CD4-positive, alpha-beta T cell (primary cell): ENCODE measurements at regions of chr11 and their contacts with region 1.

Region 1: GRCh38 chr11:119067371-119068222 is at the start of gene VPS11:
- DNase-seq: peak; percentile 93 to 99 (median 98)
- ATAC-seq: peak; percentile 91
- H3K4me3 ChIP-seq: peak within 1 kb of the TSS; percentile 99
- H3K4me3 Mint-ChIP-seq: peak within 1 kb of the TSS; percentile 91
- H3K27ac ChIP-seq: peak within 1 kb of the TSS; percentile 84 to 95
- H3K27ac Mint-ChIP-seq: peak within 1 kb of the TSS; percentile 90
- H3K4me1 ChIP-seq: peaks cover 43% of the 10 kb centered on the region
- H3K4me1 Mint-ChIP-seq: peaks cover 45% of the 10 kb centered on the region
- H3K27me3 ChIP-seq: no peaks in the 10 kb centered on the region
- H3K27me3 Mint-ChIP-seq: no peaks in the 10 kb centered on the region
- CTCF ChIP-seq: no peak
- total RNA-seq, gene VPS11: 76.4 to 84.3 TPM

Region 2: GRCh38 chr11:118997627-118998387 is 69.8 kb before region 1 on chr11 and contains the start of gene CENATAC:
- CTCF ChIA-PET with region 1: no interaction called
- POLR2A ChIA-PET with region 1: interaction called, 12 read pairs
- intact Hi-C with region 1: no loop called
- DNase-seq: peak; percentile 90 to 98 (median 96)
- ATAC-seq: peak; percentile 91
- H3K4me3 ChIP-seq: peak within 1 kb of the TSS; percentile 74
- H3K4me3 Mint-ChIP-seq: peak within 1 kb of the TSS; percentile 98
- H3K27ac ChIP-seq: peak within 1 kb of the TSS; percentile 74 to 78
- H3K27ac Mint-ChIP-seq: peak within 1 kb of the TSS; percentile 90
- H3K4me1 ChIP-seq: peaks cover 31% of the 10 kb centered on the region
- H3K4me1 Mint-ChIP-seq: peaks cover 46% of the 10 kb centered on the region
- H3K27me3 ChIP-seq: no peaks in the 10 kb centered on the region
- H3K27me3 Mint-ChIP-seq: no peaks in the 10 kb centered on the region
- CTCF ChIP-seq: no peak
- total RNA-seq, gene CENATAC: 121 to 122 TPM

Region 3: DNA sequence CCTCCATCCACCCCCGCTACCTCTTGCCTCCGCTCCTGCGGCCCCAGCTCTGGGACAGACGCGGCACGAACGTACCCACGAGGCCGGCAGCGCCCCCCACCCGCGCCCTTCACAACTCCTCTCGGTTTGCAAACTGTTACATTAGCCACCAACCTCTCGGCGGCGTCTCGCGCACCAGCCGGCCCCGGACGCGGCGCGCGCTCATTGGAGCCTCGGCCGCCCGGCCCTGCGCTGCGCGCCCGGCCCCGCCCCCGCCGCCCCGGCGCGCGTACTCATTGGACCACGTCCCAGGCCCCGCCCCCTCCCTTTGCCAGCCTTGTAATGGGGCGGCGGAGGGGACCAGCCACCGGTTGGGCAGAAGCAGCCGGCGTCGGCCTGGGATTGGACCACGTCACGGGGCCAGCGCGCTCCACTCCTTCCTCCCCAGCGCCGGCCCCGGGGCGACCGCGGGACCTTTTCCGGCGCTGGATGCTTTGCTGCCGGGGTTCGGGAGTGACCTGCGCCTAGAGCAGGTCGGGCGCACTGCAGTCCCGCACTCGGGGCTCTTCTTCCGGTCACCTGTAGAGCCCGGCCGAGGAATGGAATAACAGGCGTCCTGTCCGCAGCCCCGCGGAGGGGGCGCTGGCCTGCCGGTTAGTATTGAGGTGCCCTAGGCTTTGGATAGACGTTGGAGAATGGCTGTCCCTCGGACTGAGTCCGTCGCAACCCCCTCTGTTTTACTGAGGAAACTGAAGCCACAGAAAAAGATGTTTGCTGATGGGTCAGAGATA is 10.4 kb before region 1 on chr11 and contains the start of gene HYOU1:
- CTCF ChIA-PET with region 1: interaction called, 22 read pairs
- POLR2A ChIA-PET with region 1: interaction called, 38 read pairs
- intact Hi-C with region 1: loop called (anchors 1 kb)
- DNase-seq: peak; percentile 97 to 99 (median 98)
- ATAC-seq: peak; percentile 92
- H3K4me3 ChIP-seq: peak within 1 kb of the TSS; percentile 82
- H3K4me3 Mint-ChIP-seq: peak within 1 kb of the TSS; percentile 99
- H3K27ac ChIP-seq: peak within 1 kb of the TSS; percentile 83 to 84
- H3K27ac Mint-ChIP-seq: peak within 1 kb of the TSS; percentile 80
- H3K4me1 ChIP-seq: peaks cover 32% of the 10 kb centered on the region
- H3K4me1 Mint-ChIP-seq: peaks cover 36% of the 10 kb centered on the region
- H3K27me3 ChIP-seq: no peaks in the 10 kb centered on the region
- H3K27me3 Mint-ChIP-seq: no peaks in the 10 kb centered on the region
- CTCF ChIP-seq: peak; percentile 2
- total RNA-seq, gene HYOU1: 76.5 to 81.4 TPM

Region 4: DNA sequence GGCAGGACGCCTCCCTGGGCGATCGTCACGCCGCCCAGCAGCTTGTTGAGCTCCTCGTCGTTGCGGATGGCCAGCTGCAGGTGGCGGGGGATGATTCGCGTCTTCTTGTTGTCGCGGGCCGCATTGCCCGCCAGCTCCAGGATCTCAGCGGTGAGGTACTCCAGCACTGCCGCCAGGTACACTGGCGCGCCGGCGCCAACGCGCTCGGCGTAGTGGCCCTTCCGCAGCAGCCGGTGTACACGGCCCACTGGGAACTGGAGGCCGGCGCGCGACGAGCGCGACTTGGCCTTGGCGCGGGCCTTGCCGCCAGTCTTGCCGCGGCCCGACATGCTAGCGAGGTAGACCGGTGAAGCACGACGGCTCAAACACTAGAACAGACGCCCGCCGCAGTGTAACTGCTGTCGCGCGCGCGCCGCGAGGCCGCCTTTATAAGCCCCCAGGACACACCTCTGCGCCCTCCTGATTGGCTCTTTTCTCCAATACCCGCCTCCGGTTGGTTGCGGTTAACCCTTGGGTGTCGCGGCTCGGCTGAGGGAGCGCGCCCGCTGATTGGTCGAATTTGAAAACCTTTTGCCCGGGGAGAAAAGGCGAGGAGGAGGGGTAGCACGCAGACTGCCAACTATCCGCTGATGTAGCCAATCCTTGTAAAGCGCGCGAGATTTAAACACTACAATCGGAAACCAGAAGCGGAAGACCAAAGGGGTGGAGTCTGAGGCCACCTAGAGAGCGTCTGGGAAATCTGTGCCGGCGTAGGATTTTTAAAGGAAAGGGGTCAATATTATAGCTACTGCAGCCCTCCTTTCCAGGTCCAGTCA is 27.7 kb after region 1 on chr11:
- CTCF ChIA-PET with region 1: interaction called, 3 read pairs
- POLR2A ChIA-PET with region 1: interaction called, 44 read pairs
- intact Hi-C with region 1: loop called (anchors 1 to 5 kb)
- DNase-seq: peak; percentile 98 to 100 (median 99)
- ATAC-seq: peak; percentile 88
- H3K4me3 ChIP-seq: peak overlapping the region; percentile 86
- H3K4me3 Mint-ChIP-seq: peak overlapping the region; percentile 79
- H3K27ac ChIP-seq: peak overlapping the region; percentile 61 to 62
- H3K27ac Mint-ChIP-seq: peak overlapping the region; percentile 68
- H3K4me1 ChIP-seq: peaks cover 42% of the 10 kb centered on the region
- H3K4me1 Mint-ChIP-seq: peaks cover 37% of the 10 kb centered on the region
- H3K27me3 ChIP-seq: no peaks in the 10 kb centered on the region
- H3K27me3 Mint-ChIP-seq: no peaks in the 10 kb centered on the region
- CTCF ChIP-seq: peak; percentile 29

Region 5: DNA sequence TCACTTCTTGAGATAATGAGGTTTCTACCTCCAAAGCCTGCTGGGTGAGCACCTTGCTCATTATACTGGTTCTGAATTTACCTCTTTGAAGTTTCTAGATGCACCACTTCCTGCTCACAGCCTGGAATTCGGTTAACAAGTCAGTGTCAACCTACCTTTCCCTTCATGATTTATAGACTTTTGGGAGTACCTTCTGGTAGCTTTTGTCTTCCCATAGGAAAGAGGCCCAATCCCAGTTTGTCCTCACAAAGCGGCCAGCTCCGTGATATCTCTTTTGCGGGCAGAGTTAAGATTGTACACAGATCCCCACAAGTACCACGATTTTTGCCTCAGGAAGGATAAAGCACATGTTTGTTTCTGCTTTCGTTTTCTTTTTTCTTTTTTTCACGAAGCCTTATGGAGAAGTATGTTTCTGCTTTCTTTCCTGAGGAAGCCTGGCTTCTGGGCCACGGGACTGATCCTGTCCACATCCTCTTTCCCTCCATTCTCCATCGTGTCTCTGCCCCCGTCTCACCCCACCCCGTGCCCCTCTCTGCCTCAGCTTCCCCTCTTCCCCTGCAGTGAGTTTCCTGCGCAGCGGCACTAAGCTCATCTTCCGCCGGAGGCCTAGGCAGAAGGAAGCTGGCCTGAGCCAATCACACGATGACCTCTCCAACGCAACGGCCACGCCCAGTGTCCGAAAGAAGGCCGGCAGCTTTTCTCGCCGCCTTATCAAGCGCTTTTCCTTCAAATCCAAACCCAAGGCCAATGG is 48.1 kb after region 1 on chr11:
- CTCF ChIA-PET with region 1: no interaction called
- POLR2A ChIA-PET with region 1: interaction called, 17 read pairs
- intact Hi-C with region 1: loop called in 1 of 2 experiments (anchors 5 kb)
- DNase-seq: peak in 6 of 14 experiments; percentile 15 to 73 (median 56)
- ATAC-seq: peak; percentile 94
- H3K4me3 ChIP-seq: peak overlapping the region; percentile 48
- H3K4me3 Mint-ChIP-seq: peak overlapping the region; percentile 71
- H3K27ac ChIP-seq: peak overlapping the region; percentile 59 to 80
- H3K27ac Mint-ChIP-seq: peak overlapping the region; percentile 86
- H3K4me1 ChIP-seq: peaks cover 42% of the 10 kb centered on the region
- H3K4me1 Mint-ChIP-seq: peaks cover 30% of the 10 kb centered on the region
- H3K27me3 ChIP-seq: no peaks in the 10 kb centered on the region
- H3K27me3 Mint-ChIP-seq: no peaks in the 10 kb centered on the region
- CTCF ChIP-seq: no peak

Region 6: GRCh38 chr11:119196833-119197483 is 129.4 kb after region 1 on chr11:
- CTCF ChIA-PET with region 1: no interaction called
- POLR2A ChIA-PET with region 1: interaction called, 3 read pairs
- intact Hi-C with region 1: loop called (anchors 1 to 2 kb)
- DNase-seq: peak; percentile 36 to 90 (median 64)
- ATAC-seq: peak; percentile 99
- H3K4me3 ChIP-seq: no peak overlapping the region
- H3K4me3 Mint-ChIP-seq: no peak overlapping the region
- H3K27ac ChIP-seq: no peak overlapping the region
- H3K27ac Mint-ChIP-seq: no peak overlapping the region
- H3K4me1 ChIP-seq: no peaks in the 10 kb centered on the region
- H3K4me1 Mint-ChIP-seq: peaks cover 5% of the 10 kb centered on the region
- H3K27me3 ChIP-seq: no peaks in the 10 kb centered on the region
- H3K27me3 Mint-ChIP-seq: no peaks in the 10 kb centered on the region
- CTCF ChIP-seq: peak; percentile 85